SK-N-SH (cell line): ENCODE measurements at regions of chr2 and their contacts with region 1.

Region 1: GRCh38 chr2:16773080-16773713 is 107.6 kb upstream of the CYRIA start:
- DNase-seq: peak; percentile 67
- H3K4me3 ChIP-seq: no peak overlapping the region; a peak in 1 of 4 replicates
- H3K27ac ChIP-seq: no peak overlapping the region
- H3K4me1 ChIP-seq: peaks cover 0 to 5% of the 10 kb centered on the region in 2 experiments; a peak in 2 of 4 replicates
- H3K27me3 ChIP-seq: no peaks in the 10 kb centered on the region
- CTCF ChIP-seq: peak; percentile 74
- EP300 ChIP-seq: peak in 1 of 2 experiments; percentile 38; a peak in 1 of 4 replicates
- RAD21 ChIP-seq: peak; percentile 100

Region 2: DNA sequence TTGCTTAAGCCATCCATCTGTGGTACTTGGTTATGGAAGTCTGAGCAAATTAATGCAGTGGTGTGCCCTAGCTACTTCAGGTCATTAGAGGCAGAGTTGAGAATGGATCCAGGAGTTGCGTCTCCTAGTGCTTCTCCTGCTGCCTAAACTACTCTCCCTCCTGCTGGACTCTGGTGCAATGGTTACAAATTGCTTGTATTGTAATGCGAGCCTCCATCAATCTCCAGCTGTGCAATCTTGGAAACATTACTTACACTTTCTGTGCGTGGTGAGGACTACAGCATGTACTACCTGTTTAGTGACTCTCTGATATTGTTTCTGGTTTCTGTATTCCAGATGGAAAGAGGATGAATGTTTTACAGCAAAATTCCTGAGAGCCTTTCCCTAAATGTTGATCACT is 11.5 kb after region 1 on chr2:
- CTCF ChIA-PET with region 1: interaction called, 53 read pairs
- POLR2A ChIA-PET with region 1: no interaction called
- DNase-seq: no peak
- H3K4me3 ChIP-seq: no peak overlapping the region
- H3K27ac ChIP-seq: no peak overlapping the region
- H3K4me1 ChIP-seq: no peaks in the 10 kb centered on the region; a peak in 1 of 4 replicates
- H3K27me3 ChIP-seq: no peaks in the 10 kb centered on the region
- CTCF ChIP-seq: no peak
- EP300 ChIP-seq: no peak
- RAD21 ChIP-seq: no peak

Region 3: GRCh38 chr2:17083902-17084301 is 310.7 kb after region 1 on chr2:
- CTCF ChIA-PET with region 1: interaction called, 14 read pairs
- POLR2A ChIA-PET with region 1: interaction called, 3 read pairs
- DNase-seq: peak; percentile 50
- H3K4me3 ChIP-seq: no peak overlapping the region
- H3K27ac ChIP-seq: peak overlapping the region in 1 of 2 experiments; percentile 98; a peak in 2 of 4 replicates
- H3K4me1 ChIP-seq: peaks cover 0 to 39% of the 10 kb centered on the region in 2 experiments; a peak in 2 of 4 replicates
- H3K27me3 ChIP-seq: no peaks in the 10 kb centered on the region
- CTCF ChIP-seq: no peak
- EP300 ChIP-seq: peak in 1 of 2 experiments; percentile 93; a peak in 2 of 4 replicates
- RAD21 ChIP-seq: peak; percentile 22; the same call in 1 of the 2 replicates

Region 4: DNA sequence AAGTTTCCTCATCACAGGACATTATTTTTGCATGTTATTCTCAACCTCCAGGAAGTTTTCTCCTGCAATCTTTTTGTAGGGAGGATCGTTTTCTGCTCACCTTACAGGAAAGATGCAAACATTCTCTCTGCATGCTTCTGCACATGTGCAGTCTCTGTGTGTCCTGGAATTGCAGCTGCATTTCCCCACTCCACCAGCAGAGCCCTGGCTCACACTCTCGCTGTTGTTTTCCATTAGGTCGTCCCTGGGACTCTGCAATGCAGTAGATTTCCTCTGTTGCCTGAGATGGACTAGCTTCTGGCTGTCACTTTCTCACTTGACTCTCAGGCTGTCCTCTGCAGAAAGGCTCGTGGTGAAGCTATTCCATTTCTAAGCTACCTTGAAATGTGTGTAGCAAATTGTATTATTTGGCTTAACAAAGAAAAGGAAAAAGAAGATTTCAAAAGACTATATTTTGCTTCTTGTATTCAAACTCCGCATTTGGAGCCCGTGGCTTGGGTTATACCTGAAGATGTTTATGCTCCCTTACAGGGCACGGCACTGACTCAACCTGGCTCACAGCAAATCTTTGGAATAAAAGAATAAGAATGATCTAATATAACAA is 398.4 kb after region 1 on chr2:
- CTCF ChIA-PET with region 1: interaction called, 33 read pairs
- POLR2A ChIA-PET with region 1: no interaction called
- DNase-seq: peak; percentile 66
- H3K4me3 ChIP-seq: no peak overlapping the region; a peak in 1 of 4 replicates
- H3K27ac ChIP-seq: no peak overlapping the region
- H3K4me1 ChIP-seq: peaks cover 0 to 3% of the 10 kb centered on the region in 2 experiments; a peak in 1 of 4 replicates
- H3K27me3 ChIP-seq: no peaks in the 10 kb centered on the region
- CTCF ChIP-seq: peak; percentile 65
- EP300 ChIP-seq: 0 out of 4 replicates have a peak, but pooled peaks of 1 of the 2 experiments have one; percentile 15
- RAD21 ChIP-seq: peak; percentile 70

Region 5: DNA sequence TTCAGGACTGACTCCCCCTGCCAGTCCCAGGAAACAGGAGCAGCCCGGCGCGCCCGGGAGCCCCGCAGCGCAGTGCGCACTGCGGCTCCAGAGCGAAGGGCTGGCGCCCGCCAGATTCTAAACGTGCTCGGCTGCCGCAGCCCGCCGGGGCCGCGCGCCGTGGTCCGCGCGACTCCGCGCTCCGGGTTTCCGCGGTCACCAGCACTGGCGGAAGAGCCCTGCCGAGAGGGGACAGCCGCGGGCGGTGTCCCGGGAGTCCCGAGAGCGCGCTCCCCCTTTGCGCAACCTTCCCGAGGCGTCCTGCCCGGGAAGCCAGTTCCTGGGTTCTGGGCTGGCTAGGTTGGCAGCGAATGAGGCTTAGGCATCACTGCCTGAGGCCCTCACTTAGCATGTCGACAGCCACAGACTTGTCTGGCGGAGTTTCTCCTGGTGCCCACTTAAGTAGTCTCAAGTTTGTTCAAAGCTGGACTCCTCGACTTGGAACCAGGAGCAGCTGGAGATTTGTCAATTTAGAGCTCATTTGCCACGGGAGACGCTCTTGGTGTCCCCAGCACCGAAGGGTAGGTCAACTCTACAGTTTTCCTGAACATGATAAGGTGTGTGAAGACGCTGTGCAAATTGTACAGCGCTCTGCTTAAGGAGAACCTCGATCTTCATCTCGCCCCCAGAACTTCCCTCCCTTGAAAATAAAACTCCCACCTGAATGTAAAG is 765.8 kb after region 1 on chr2:
- CTCF ChIA-PET with region 1: interaction called, 16 read pairs
- POLR2A ChIA-PET with region 1: interaction called, 4 read pairs
- DNase-seq: peak; percentile 87
- H3K4me3 ChIP-seq: peak overlapping the region; percentile 62 to 74
- H3K27ac ChIP-seq: peak overlapping the region; percentile 22 to 47; a peak in 3 of 4 replicates
- H3K4me1 ChIP-seq: peaks cover 0 to 25% of the 10 kb centered on the region in 2 experiments; a peak in 2 of 4 replicates
- H3K27me3 ChIP-seq: peaks cover 19% of the 10 kb centered on the region; the same call in 1 of the 2 replicates
- CTCF ChIP-seq: no peak
- EP300 ChIP-seq: no peak; a peak in 1 of 4 replicates
- RAD21 ChIP-seq: no peak

Region 6: DNA sequence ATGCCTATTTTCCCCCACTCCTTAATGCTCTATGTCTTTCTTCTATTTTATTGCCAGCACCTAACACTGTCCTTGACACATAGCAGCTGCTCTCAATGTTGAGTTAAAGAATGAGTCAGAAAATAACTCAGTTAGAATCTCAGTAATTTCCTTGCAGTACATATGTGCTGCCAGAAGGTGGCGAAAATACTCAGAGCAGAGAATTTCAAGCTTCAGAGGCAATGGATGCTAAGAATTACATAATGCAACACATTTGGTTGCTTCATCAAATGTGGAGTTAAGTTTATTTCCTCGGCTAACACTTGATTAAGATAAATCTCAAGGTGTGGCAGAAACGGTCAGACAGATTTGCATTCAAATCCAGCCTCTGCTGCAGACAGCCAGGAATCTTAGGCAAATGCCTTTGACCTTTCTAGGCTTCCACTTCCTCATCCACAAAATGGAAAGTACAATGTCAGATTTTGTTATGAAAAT is 872.9 kb after region 1 on chr2:
- CTCF ChIA-PET with region 1: interaction called, 36 read pairs
- POLR2A ChIA-PET with region 1: interaction called, 3 read pairs
- DNase-seq: peak; percentile 64
- H3K4me3 ChIP-seq: no peak overlapping the region; a peak in 1 of 4 replicates
- H3K27ac ChIP-seq: peak overlapping the region in 1 of 2 experiments; percentile 25; a peak in 1 of 4 replicates
- H3K4me1 ChIP-seq: peaks cover 0 to 30% of the 10 kb centered on the region in 2 experiments; a peak in 2 of 4 replicates
- H3K27me3 ChIP-seq: no peaks in the 10 kb centered on the region
- CTCF ChIP-seq: peak; percentile 96
- EP300 ChIP-seq: no peak
- RAD21 ChIP-seq: peak; percentile 78